HCT116 (cell line): ENCODE measurements at regions of chrX and their contacts with region 1.

Region 1: GRCh38 chrX:13750204-13750603 is 15.7 kb downstream of the OFD1 start:
- DNase-seq: peak; percentile 13
- ATAC-seq: peak; percentile 72
- H3K4me3 ChIP-seq: no peak overlapping the region
- H3K27ac ChIP-seq: no peak overlapping the region
- H3K4me1 ChIP-seq: no peaks in the 10 kb centered on the region
- H3K27me3 ChIP-seq: no peaks in the 10 kb centered on the region
- CTCF ChIP-seq: peak; percentile 22 to 53 (median 48); a peak in 4 of 6 replicates
- POLR2A ChIP-seq: no peak
- RAD21 ChIP-seq: peak; percentile 51

Region 2: DNA sequence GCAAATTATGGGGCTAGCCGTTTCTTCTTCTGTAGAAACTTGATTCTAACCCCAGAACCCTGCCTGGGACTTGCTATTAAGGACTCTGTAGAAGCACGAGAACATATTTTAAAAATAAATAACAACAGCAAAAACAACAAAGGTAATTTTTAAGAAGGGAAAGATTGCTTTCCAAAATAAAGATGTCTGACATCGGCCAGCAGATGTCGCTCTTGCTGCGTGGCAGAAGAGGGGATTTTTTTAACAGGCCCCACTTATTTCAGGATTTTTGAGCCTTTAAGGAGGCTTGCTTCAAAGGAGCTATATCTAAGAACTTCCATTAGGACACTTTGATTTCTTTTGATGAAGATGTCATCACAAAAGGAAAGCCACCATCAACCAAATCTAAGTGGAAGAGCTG is 243.6 kb before region 1 on chrX:
- CTCF ChIA-PET with region 1: interaction called, 8 read pairs
- POLR2A ChIA-PET with region 1: no interaction called
- RAD21 ChIA-PET with region 1: no interaction called
- intact Hi-C with region 1: loop called (anchors 5 kb)
- DNase-seq: peak; percentile 28
- ATAC-seq: no peak
- H3K4me3 ChIP-seq: no peak overlapping the region
- H3K27ac ChIP-seq: no peak overlapping the region
- H3K4me1 ChIP-seq: no peaks in the 10 kb centered on the region
- H3K27me3 ChIP-seq: no peaks in the 10 kb centered on the region
- CTCF ChIP-seq: peak; percentile 51 to 67 (median 65); a peak in 5 of 6 replicates
- POLR2A ChIP-seq: no peak
- RAD21 ChIP-seq: peak; percentile 84

Region 3: GRCh38 chrX:13658602-13659001 is 91.6 kb before region 1 on chrX:
- CTCF ChIA-PET with region 1: no interaction called
- POLR2A ChIA-PET with region 1: no interaction called
- RAD21 ChIA-PET with region 1: no interaction called
- intact Hi-C with region 1: loop called (anchors 2 kb)
- DNase-seq: peak; percentile 35
- ATAC-seq: peak; percentile 40; the same call in 1 of the 2 replicates
- H3K4me3 ChIP-seq: no peak overlapping the region
- H3K27ac ChIP-seq: no peak overlapping the region
- H3K4me1 ChIP-seq: peaks cover 9 to 10% of the 10 kb centered on the region in 2 experiments
- H3K27me3 ChIP-seq: no peaks in the 10 kb centered on the region
- CTCF ChIP-seq: peak; percentile 42 to 72 (median 64)
- POLR2A ChIP-seq: no peak
- RAD21 ChIP-seq: peak; percentile 81

Region 4: GRCh38 chrX:13876652-13877051 is 126.4 kb after region 1 on chrX:
- CTCF ChIA-PET with region 1: no interaction called
- POLR2A ChIA-PET with region 1: no interaction called
- RAD21 ChIA-PET with region 1: no interaction called
- intact Hi-C with region 1: no loop called
- DNase-seq: no peak
- ATAC-seq: no peak
- H3K4me3 ChIP-seq: no peak overlapping the region
- H3K27ac ChIP-seq: no peak overlapping the region
- H3K4me1 ChIP-seq: no peaks in the 10 kb centered on the region
- H3K27me3 ChIP-seq: no peaks in the 10 kb centered on the region
- CTCF ChIP-seq: no peak
- POLR2A ChIP-seq: no peak
- RAD21 ChIP-seq: no peak

Region 5: GRCh38 chrX:13911586-13911985 is 161.4 kb after region 1 on chrX:
- CTCF ChIA-PET with region 1: no interaction called
- POLR2A ChIA-PET with region 1: no interaction called
- RAD21 ChIA-PET with region 1: no interaction called
- intact Hi-C with region 1: no loop called
- DNase-seq: no peak
- ATAC-seq: no peak
- H3K4me3 ChIP-seq: no peak overlapping the region
- H3K27ac ChIP-seq: no peak overlapping the region
- H3K4me1 ChIP-seq: no peaks in the 10 kb centered on the region
- H3K27me3 ChIP-seq: no peaks in the 10 kb centered on the region
- CTCF ChIP-seq: no peak
- POLR2A ChIP-seq: no peak
- RAD21 ChIP-seq: no peak